Posterior cingulate gyrus (tissue), 11 donors: ENCODE measurements at regions of chr3 and their contacts with region 1.

Region 1: GRCh38 chr3:42780892-42781700 is 8.0 kb upstream of the CCDC13 start:
- DNase-seq: no peak

Region 2: DNA sequence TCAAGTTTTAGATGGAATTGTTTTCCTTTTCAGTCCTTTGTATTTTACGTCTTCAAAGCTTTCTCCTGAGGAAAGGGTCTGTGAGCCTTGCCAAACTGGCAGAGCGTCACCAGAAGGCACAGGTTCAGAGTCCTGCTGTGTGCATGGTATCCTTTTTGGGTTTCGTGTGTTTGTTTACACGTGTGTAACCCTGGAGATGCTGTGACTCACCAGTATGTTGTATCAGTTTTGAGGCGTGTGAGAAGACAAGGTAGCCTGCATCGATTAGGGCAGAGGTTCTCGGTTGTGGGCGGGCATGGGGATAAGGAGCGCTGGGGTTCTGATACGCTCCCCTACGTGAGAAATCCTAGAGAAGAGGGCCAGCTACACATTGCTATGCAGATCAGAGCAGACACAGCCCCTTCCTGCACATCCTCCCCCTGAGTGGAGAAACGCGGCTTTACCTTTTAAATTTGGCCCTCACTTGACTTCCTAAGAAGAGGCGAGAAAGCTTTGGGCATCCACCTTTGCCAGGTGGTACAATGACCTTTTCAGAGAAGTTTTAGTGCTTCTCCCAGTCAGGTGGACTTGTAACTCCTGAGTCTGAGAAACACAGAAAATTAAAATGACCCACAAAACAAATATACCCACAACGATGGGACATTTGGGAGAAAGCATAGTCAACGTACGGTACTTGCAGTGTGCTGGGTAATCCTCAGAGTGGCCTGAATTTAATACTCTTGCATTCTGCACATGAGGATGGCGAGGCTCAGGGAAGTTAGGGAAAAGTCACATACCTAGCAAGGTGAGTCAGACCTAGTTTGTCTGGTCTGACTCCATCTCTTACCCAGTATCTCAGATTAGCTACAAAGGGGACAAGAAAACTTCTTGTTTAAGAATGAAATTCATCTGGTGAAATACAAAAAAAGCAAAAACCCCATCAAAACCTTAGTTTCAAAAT is 651.8 kb before region 1 on chr3:
- intact Hi-C with region 1: no loop called
- DNase-seq: no peak

Region 3: DNA sequence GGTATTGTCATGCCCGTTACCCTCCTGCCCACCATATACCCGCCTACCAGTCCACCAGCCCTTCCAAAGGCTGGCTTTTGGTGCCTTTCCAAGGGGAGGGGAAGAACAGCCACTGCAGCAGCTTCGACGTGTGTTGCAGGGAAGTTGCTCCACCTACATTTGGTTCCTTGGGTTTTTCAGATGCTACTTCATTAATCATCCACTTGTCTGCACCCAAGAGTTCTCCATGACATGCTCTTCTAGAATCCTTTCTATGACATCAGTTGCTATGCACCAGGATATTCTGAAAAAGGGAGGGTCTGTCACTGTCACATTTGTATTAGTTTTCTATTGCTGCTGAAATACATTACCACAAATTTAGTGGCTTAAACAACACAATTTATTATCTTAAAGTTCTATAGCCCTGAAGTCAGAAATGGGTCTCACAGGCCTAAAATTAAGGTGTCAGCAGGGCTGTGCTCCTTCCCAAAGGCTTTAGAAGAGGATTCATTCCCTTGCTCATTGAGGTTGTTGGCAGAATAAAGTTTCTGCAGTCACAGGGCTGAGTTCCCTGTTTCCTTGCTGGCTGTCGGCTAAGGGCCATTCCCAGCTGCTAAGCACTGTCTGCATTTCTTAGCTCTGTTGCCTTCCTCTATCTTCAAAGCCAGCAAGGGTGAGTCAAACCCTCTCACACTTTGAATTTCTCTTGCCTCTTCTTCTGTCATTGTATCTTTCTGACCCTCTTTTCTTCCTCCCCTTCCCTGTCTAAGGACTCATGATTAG is 370.5 kb before region 1 on chr3 and contains the start of gene LYZL4:
- intact Hi-C with region 1: no loop called
- DNase-seq: no peak

Region 4: GRCh38 chr3:42804106-42804830 is 23.2 kb after region 1 on chr3 and contains the start of gene HIGD1A:
- intact Hi-C with region 1: loop called (anchors 2 kb)
- DNase-seq: peak; percentile 95 to 100 (median 97)

Region 5: GRCh38 chr3:42831321-42831713 is 50.2 kb after region 1 on chr3:
- intact Hi-C with region 1: loop called (anchors 2 kb)
- DNase-seq: peak in 8 of 10 donors; percentile 19 to 92 (median 69)

Region 6: DNA sequence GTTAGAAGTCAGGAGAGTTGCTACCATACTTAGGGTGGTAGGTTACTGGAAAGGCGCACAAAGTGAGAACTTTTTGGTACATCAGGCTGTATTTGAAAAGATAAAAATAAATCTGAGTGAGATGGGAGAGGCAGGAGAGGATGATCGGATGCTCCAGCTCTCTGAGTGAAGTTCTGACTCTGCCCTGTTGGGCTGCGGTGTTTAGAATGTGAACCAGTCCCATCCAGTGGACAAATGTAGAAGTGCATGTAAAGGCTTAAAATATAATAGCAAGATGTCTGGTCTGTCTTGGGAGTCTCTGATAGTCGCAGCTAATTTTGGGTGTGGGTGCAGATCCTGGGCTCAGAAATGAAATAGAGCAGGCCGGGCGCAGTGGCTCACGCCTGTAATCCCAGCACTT is 58.5 kb after region 1 on chr3:
- intact Hi-C with region 1: loop called (anchors 1 kb)
- DNase-seq: peak in 7 of 10 donors; percentile 18 to 89 (median 34)

Region 7: DNA sequence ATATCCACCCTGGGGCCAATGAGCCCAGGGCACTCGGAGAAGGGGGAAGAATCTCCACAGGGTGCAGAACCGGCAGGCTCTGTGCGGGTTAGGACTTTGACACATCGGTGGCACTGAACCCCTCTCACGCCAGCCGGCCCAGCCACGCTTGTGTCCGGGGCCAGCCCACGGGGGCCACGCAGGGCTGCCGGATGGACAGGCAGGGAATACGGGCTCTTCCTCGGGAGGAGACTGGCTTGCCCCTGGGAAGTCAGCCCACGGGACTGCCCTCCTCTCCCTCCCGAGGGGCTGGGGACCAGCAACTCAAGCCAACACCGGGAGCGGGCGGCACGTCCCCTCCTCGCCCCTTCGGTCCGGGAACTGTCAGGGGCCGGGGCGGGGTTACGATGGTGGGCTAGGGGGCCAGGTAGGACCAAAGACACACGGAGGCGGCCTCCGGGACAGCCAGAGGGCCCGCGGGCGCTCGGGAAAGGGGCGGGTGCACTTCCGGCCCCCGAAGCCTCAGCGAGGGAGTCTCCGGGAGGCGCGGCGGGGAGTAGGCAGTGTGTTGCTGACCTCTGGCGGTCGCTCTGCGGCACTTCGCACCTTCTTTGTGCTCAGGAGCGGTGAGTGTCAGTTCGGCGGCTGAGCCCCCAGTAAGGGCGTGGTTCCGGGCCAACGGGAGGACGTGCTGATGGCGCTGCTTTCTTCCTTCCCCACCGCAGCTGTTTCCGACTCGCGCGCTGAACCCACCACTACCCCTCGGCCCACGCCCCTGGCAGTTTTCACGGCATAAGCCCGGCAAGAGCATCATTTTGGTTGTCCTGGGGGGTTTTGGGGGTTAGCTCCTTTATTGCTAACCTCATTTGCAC is 99.7 kb after region 1 on chr3:
- intact Hi-C with region 1: loop called (anchors 1 kb)
- DNase-seq: peak; percentile 71 to 98 (median 82)